GM12878 (cell line): ENCODE measurements at regions of chr7 and their contacts with region 1.

Region 1: DNA sequence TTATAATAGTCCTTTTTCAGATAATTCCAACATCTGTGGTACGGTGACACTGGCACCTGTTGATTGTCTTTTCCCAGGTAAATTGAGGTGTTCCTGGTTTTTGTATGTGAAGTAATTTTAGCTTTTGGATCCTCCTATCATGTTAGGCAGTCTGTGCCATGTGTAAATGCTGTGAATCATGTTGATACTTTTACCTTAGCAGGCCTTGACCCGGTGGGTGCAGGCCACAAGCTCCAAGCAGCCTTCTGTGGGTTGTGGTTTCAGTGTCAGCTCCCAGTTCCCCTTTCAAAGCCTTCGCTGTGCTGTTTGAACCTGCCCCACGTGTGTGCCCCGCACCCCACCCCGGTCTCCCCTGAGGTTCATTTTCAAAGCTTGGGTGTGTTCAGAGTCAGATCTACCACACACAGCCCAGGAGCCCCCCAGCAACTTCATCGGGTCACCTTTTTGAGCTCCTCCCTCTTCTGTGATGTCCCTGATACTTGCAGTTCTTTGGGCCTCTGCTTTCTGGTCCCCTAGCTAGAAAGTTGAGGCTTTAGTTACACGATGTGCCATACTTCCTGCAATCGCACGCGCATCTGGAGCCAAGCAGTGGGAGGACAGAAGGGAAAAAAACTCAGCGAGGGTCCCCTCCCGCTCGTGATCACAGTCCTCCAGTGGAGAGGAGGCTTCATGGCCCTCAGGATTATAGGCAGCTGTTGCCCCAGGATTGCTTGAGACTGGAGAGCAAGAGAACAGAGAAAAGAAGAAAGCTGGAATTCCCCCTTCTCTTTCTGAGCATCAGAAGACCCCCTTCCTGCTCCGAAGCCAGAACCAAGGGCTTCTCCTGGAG is 8.7 kb upstream of the BHLHA15 start:
- DNase-seq: peak; percentile 94
- ATAC-seq: peak; percentile 94
- H3K4me3 ChIP-seq: peak overlapping the region; percentile 54; the same call in 1 of the 2 replicates
- H3K27ac ChIP-seq: peak overlapping the region; percentile 58
- H3K4me1 ChIP-seq: peaks cover 47% of the 10 kb centered on the region
- H3K27me3 ChIP-seq: no peaks in the 10 kb centered on the region
- CTCF ChIP-seq: no peak
- EP300 ChIP-seq: peak; percentile 95 to 98
- POLR2A ChIP-seq: no peak
- RAD21 ChIP-seq: 0 out of 2 replicates have a peak, but pooled peaks have one; percentile 5

Region 2: DNA sequence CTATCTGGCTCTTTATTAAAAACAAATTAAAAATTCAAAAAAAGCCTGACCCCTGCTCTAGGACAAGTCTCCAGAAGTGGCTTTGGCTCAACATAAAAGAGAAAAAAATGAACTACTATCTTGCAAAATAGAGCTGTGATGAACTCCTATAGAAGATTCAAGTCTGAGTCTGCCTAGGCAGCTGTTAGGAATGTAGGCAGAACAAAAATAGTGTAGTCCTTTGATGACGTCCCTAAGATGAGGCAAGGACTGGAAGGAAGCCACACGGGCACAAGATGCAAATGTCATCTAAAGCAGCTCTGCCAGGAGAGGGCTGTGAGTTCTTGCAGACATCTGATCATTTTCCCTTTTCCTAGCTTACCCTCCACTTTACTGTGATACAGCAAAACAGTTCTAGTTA is 350.9 kb before region 1 on chr7:
- CTCF ChIA-PET with region 1: no interaction called
- POLR2A ChIA-PET with region 1: no interaction called
- RAD21 ChIA-PET with region 1: no interaction called
- SMC1A ChIA-PET with region 1: no interaction called
- in situ Hi-C with region 1: no loop called
- intact Hi-C with region 1: no loop called
- DNase-seq: no peak
- ATAC-seq: no peak
- H3K4me3 ChIP-seq: no peak overlapping the region
- H3K27ac ChIP-seq: no peak overlapping the region
- H3K4me1 ChIP-seq: no peaks in the 10 kb centered on the region
- H3K27me3 ChIP-seq: no peaks in the 10 kb centered on the region
- CTCF ChIP-seq: no peak
- EP300 ChIP-seq: no peak
- POLR2A ChIP-seq: no peak
- RAD21 ChIP-seq: no peak

Region 3: DNA sequence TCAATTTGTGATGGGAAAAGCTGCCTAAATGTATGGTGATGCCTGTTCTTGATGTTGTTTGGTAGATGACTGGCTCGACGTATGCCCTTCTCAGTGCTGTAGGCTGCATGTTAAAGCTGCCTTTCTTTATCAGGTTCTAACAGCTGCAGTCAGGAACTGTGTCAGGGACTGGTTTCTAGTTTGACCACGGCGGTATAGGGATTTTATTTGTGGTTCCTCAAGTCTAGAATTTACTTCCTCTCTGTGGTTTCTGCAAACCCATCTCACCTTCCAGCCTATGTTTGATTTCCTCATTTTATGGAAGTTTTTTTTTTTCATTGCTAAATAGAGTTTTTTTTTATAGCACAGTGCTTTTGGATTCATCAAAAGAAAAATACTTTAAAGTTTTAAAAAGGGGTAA is 69.4 kb before region 1 on chr7:
- CTCF ChIA-PET with region 1: interaction called, 7 read pairs
- POLR2A ChIA-PET with region 1: interaction called, 6 read pairs
- RAD21 ChIA-PET with region 1: interaction called, 13 read pairs
- SMC1A ChIA-PET with region 1: interaction called, 28 read pairs
- in situ Hi-C with region 1: no loop called
- intact Hi-C with region 1: loop called (anchors 2 kb)
- DNase-seq: peak; percentile 63
- ATAC-seq: peak; percentile 82
- H3K4me3 ChIP-seq: no peak overlapping the region
- H3K27ac ChIP-seq: no peak overlapping the region
- H3K4me1 ChIP-seq: peaks cover 39% of the 10 kb centered on the region
- H3K27me3 ChIP-seq: no peaks in the 10 kb centered on the region
- CTCF ChIP-seq: no peak
- EP300 ChIP-seq: peak in 1 of 2 experiments; percentile 82; a peak in 3 of 4 replicates
- POLR2A ChIP-seq: no peak
- RAD21 ChIP-seq: no peak

Region 4: DNA sequence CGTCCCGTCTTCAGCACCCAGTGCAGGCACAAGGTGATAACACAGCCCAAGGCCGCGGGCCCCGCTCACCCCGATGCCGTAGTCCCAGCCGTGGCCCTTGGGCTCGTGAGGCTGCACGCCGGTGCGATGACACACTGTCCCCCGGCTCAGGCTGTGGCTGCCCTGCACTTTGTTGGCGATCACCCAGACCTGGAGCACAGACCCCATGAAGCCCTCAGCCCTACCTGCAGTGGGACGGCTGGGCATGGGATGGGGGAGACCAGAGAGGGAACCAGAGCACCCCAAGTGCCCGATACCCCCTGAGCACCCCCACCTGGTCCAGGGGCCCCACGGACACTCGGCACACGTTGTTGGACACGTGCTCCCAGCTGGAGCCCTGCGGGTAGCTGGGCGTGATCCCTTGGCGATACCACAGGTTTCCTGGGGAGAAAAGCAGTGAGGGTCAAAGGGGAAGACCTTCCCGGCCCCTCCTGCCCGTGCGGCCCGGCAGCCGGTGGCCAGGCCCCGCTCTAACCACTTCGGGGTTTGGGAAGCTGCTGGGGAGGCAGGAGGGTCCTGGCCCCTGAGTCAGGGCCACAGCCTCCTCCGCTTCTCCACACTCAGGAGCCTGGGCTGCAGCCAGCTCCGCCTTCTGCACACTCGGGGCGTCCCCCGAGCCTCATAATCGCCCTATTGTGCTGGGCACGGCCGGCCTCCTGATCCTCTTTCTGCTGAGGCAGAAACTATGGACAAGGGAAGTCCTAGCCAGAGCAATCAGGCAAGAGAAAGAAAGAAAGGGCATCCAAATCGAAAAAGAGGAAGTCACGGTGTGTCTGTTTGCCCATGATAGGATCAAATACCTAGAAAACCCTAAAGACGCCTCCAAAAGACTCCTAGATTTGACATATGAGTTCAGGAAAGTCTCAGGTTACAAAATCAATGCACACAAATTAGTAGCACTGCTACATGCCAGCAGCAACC is 15.3 kb after region 1 on chr7:
- CTCF ChIA-PET with region 1: no interaction called
- POLR2A ChIA-PET with region 1: no interaction called
- RAD21 ChIA-PET with region 1: interaction called, 7 read pairs
- SMC1A ChIA-PET with region 1: no interaction called
- in situ Hi-C with region 1: no loop called
- intact Hi-C with region 1: loop called (anchors 2 kb)
- DNase-seq: no peak
- ATAC-seq: peak; percentile 50
- H3K4me3 ChIP-seq: no peak overlapping the region; the same call in 1 of the 2 replicates
- H3K27ac ChIP-seq: no peak overlapping the region
- H3K4me1 ChIP-seq: peaks cover 24% of the 10 kb centered on the region
- H3K27me3 ChIP-seq: no peaks in the 10 kb centered on the region
- CTCF ChIP-seq: no peak
- EP300 ChIP-seq: no peak
- POLR2A ChIP-seq: no peak
- RAD21 ChIP-seq: no peak

Region 5: GRCh38 chr7:98251841-98252639 is 49.5 kb after region 1 on chr7 and contains the start of gene TECPR1:
- CTCF ChIA-PET with region 1: interaction called, 8 read pairs
- POLR2A ChIA-PET with region 1: interaction called, 6 read pairs
- RAD21 ChIA-PET with region 1: interaction called, 18 read pairs
- SMC1A ChIA-PET with region 1: interaction called, 3 read pairs
- in situ Hi-C with region 1: no loop called
- intact Hi-C with region 1: no loop called
- DNase-seq: peak; percentile 66
- ATAC-seq: peak; percentile 99
- H3K4me3 ChIP-seq: peak within 1 kb of the TSS; percentile 83
- H3K27ac ChIP-seq: peak within 1 kb of the TSS; percentile 59
- H3K4me1 ChIP-seq: peaks cover 10% of the 10 kb centered on the region
- H3K27me3 ChIP-seq: no peaks in the 10 kb centered on the region
- CTCF ChIP-seq: 0 out of 6 replicates have a peak, but pooled peaks of 1 of the 3 experiments have one; percentile 1
- EP300 ChIP-seq: no peak
- POLR2A ChIP-seq: peak; percentile 86
- RAD21 ChIP-seq: no peak
- polyA plus RNA-seq, gene TECPR1: 0.26 to 0.51 TPM

Region 6: GRCh38 chr7:98795741-98796493 is 593.3 kb after region 1 on chr7:
- CTCF ChIA-PET with region 1: no interaction called
- POLR2A ChIA-PET with region 1: no interaction called
- RAD21 ChIA-PET with region 1: no interaction called
- SMC1A ChIA-PET with region 1: no interaction called
- in situ Hi-C with region 1: no loop called
- intact Hi-C with region 1: loop called (anchors 5 kb)
- DNase-seq: peak; percentile 77
- ATAC-seq: peak; percentile 96
- H3K4me3 ChIP-seq: no peak overlapping the region
- H3K27ac ChIP-seq: peak overlapping the region; percentile 83
- H3K4me1 ChIP-seq: peaks cover 21% of the 10 kb centered on the region
- H3K27me3 ChIP-seq: no peaks in the 10 kb centered on the region
- CTCF ChIP-seq: no peak
- EP300 ChIP-seq: peak in 1 of 2 experiments; percentile 77; a peak in 2 of 4 replicates
- POLR2A ChIP-seq: no peak
- RAD21 ChIP-seq: no peak